GM12878 (cell line): ENCODE measurements at regions of chr12 and their contacts with region 1.

Region 1: GRCh38 chr12:674272-674781 is 11.1 kb upstream of the NINJ2 start:
- DNase-seq: peak; percentile 100
- ATAC-seq: peak; percentile 84
- H3K4me3 ChIP-seq: peak overlapping the region; percentile 61; the same call in 1 of the 2 replicates
- H3K27ac ChIP-seq: peak overlapping the region; percentile 100
- H3K4me1 ChIP-seq: peaks cover 57% of the 10 kb centered on the region
- H3K27me3 ChIP-seq: no peaks in the 10 kb centered on the region
- CTCF ChIP-seq: no peak
- EP300 ChIP-seq: peak; percentile 81 to 88
- POLR2A ChIP-seq: peak; percentile 83
- RAD21 ChIP-seq: peak; percentile 16; the same call in 1 of the 2 replicates

Region 2: DNA sequence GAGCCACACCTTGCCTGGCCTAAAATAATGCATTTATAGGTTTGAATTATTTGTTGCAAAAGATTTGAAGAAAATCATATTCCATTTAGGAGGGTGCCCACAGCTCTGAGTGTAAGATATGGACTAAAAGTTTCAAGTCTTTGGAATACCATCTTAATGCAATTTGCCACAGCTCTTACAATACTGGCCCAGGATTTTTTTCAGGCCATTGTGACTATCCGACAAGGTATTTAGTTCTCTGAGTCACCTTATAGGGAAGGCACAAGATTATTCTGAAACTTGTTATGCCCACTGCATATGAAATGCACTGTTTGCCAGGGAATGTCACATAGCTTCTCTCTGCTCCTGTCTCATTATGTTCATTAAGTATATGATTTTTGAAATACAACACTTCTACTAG is 382.1 kb before region 1 on chr12:
- CTCF ChIA-PET with region 1: no interaction called
- POLR2A ChIA-PET with region 1: no interaction called
- RAD21 ChIA-PET with region 1: no interaction called
- SMC1A ChIA-PET with region 1: no interaction called
- in situ Hi-C with region 1: no loop called
- intact Hi-C with region 1: no loop called
- DNase-seq: no peak
- ATAC-seq: no peak
- H3K4me3 ChIP-seq: no peak overlapping the region
- H3K27ac ChIP-seq: no peak overlapping the region
- H3K4me1 ChIP-seq: peaks cover under 1% of the 10 kb centered on the region; the same call in 1 of the 2 replicates
- H3K27me3 ChIP-seq: no peaks in the 10 kb centered on the region
- CTCF ChIP-seq: no peak
- EP300 ChIP-seq: no peak
- POLR2A ChIP-seq: no peak
- RAD21 ChIP-seq: no peak

Region 3: DNA sequence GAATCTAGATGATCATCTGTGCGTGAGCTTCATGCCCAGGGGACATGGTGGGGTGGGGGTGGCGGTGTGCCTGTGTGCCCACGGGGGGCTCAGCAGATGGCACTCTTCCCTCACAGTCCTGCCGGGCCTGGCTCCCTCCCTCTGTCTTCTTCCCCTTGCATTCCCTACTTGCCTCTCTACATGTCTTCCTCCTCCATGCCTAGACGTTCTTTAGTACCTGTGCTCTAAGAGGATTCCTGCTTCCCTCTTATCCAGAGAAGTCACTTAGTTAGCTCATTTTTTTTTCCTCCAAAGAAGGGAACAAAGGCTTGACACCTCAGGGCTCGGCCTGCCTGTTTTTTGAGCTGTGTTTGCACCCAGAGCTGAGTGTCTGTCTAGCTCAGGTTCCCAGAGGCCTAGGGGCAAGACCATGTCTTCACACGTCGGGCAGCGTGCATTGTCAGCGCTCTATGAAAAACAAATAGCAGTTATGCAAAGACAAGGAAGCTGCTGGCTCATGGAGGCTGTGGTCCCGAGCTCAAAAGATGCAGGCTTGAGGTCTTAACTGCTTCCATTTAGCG is 59.8 kb before region 1 on chr12:
- CTCF ChIA-PET with region 1: interaction called, 20 read pairs
- POLR2A ChIA-PET with region 1: interaction called, 6 read pairs
- RAD21 ChIA-PET with region 1: interaction called, 29 read pairs
- SMC1A ChIA-PET with region 1: interaction called, 20 read pairs
- in situ Hi-C with region 1: no loop called
- intact Hi-C with region 1: no loop called
- DNase-seq: no peak
- ATAC-seq: peak; percentile 78
- H3K4me3 ChIP-seq: no peak overlapping the region
- H3K27ac ChIP-seq: no peak overlapping the region
- H3K4me1 ChIP-seq: peaks cover 10% of the 10 kb centered on the region
- H3K27me3 ChIP-seq: no peaks in the 10 kb centered on the region
- CTCF ChIP-seq: peak; percentile 61 to 86 (median 63)
- EP300 ChIP-seq: no peak
- POLR2A ChIP-seq: no peak
- RAD21 ChIP-seq: peak; percentile 75

Region 4: DNA sequence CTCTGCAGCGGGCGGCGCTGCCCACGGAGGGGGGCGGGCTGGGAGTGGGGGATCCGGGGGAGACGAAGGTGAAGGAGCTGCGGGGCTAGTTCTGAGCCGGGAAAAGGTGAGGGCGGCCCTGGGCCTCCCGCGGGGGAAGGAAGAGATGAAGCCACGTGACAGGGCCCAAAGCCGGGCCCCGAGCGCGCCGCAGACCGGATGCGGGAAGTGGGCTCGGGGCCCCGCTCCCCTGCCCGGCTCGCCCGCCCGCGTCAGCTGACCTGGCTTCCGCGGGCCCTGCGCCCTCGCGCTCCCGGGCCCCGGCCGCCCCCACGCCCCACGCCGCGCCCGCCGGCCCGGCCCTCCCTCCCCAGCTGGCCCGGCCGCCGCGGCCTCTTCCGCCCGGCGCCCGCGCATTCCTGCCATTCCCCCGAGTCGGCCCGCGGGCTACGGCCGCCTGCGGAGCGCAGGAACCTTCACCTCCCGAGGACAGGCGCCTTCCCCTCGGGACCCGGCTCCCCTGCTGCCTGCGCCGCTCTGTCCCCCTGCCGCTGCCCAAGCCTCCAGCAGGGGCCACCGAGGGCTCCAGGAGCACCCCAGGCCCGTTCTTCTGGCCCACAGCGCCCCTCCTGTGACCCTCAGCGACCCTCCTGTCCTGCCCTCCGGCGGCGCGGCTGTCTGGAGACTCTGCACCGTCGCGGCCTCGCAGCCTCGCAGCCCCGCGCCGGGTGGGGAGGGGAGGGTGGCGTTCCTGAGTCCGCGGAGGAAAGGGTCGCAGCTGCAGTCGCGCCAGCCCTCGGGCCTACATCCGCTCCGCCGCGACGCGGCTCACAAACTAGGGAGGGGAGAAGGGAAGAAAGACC is 31.5 kb before region 1 on chr12:
- CTCF ChIA-PET with region 1: interaction called, 7 read pairs
- POLR2A ChIA-PET with region 1: interaction called, 47 read pairs
- RAD21 ChIA-PET with region 1: interaction called, 49 read pairs
- SMC1A ChIA-PET with region 1: interaction called, 12 read pairs
- in situ Hi-C with region 1: no loop called
- intact Hi-C with region 1: loop called (anchors 1 kb)
- DNase-seq: no peak
- ATAC-seq: peak; percentile 82
- H3K4me3 ChIP-seq: peak overlapping the region; percentile 82
- H3K27ac ChIP-seq: peak overlapping the region; percentile 86
- H3K4me1 ChIP-seq: peaks cover 57% of the 10 kb centered on the region
- H3K27me3 ChIP-seq: no peaks in the 10 kb centered on the region
- CTCF ChIP-seq: peak; percentile 20 to 68 (median 34)
- EP300 ChIP-seq: 0 out of 4 replicates have a peak, but pooled peaks of 1 of the 2 experiments have one; percentile 11
- POLR2A ChIP-seq: peak; percentile 83
- RAD21 ChIP-seq: peak; percentile 21

Region 5: GRCh38 chr12:685388-685787 is 11.1 kb after region 1 on chr12:
- CTCF ChIA-PET with region 1: interaction called, 12 read pairs
- POLR2A ChIA-PET with region 1: interaction called, 79 read pairs
- RAD21 ChIA-PET with region 1: interaction called, 88 read pairs
- SMC1A ChIA-PET with region 1: interaction called, 76 read pairs
- in situ Hi-C with region 1: no loop called
- intact Hi-C with region 1: no loop called
- DNase-seq: peak; percentile 88
- ATAC-seq: peak; percentile 84
- H3K4me3 ChIP-seq: peak overlapping the region; percentile 37; the same call in 1 of the 2 replicates
- H3K27ac ChIP-seq: peak overlapping the region; percentile 73
- H3K4me1 ChIP-seq: peaks cover 39% of the 10 kb centered on the region
- H3K27me3 ChIP-seq: no peaks in the 10 kb centered on the region
- CTCF ChIP-seq: no peak
- EP300 ChIP-seq: peak; percentile 44 to 64; a peak in 2 of 4 replicates
- POLR2A ChIP-seq: 0 out of 2 replicates have a peak, but pooled peaks have one; percentile 40
- RAD21 ChIP-seq: no peak

Region 6: GRCh38 chr12:716506-716905 is 42.2 kb after region 1 on chr12:
- CTCF ChIA-PET with region 1: interaction called, 5 read pairs
- POLR2A ChIA-PET with region 1: interaction called, 20 read pairs
- RAD21 ChIA-PET with region 1: interaction called, 16 read pairs
- SMC1A ChIA-PET with region 1: interaction called, 12 read pairs
- in situ Hi-C with region 1: no loop called
- intact Hi-C with region 1: loop called (anchors 2 kb)
- DNase-seq: no peak
- ATAC-seq: no peak
- H3K4me3 ChIP-seq: no peak overlapping the region
- H3K27ac ChIP-seq: no peak overlapping the region
- H3K4me1 ChIP-seq: peaks cover 24% of the 10 kb centered on the region
- H3K27me3 ChIP-seq: no peaks in the 10 kb centered on the region
- CTCF ChIP-seq: no peak
- EP300 ChIP-seq: no peak
- POLR2A ChIP-seq: no peak
- RAD21 ChIP-seq: no peak

Region 7: GRCh38 chr12:737122-737739 is 62.9 kb after region 1 on chr12:
- CTCF ChIA-PET with region 1: interaction called, 7 read pairs
- POLR2A ChIA-PET with region 1: interaction called, 8 read pairs
- RAD21 ChIA-PET with region 1: interaction called, 4 read pairs
- SMC1A ChIA-PET with region 1: interaction called, 10 read pairs
- in situ Hi-C with region 1: no loop called
- intact Hi-C with region 1: no loop called
- DNase-seq: no peak
- ATAC-seq: no peak
- H3K4me3 ChIP-seq: no peak overlapping the region
- H3K27ac ChIP-seq: no peak overlapping the region
- H3K4me1 ChIP-seq: no peaks in the 10 kb centered on the region
- H3K27me3 ChIP-seq: no peaks in the 10 kb centered on the region
- CTCF ChIP-seq: no peak
- EP300 ChIP-seq: no peak
- POLR2A ChIP-seq: no peak
- RAD21 ChIP-seq: no peak

Region 8: DNA sequence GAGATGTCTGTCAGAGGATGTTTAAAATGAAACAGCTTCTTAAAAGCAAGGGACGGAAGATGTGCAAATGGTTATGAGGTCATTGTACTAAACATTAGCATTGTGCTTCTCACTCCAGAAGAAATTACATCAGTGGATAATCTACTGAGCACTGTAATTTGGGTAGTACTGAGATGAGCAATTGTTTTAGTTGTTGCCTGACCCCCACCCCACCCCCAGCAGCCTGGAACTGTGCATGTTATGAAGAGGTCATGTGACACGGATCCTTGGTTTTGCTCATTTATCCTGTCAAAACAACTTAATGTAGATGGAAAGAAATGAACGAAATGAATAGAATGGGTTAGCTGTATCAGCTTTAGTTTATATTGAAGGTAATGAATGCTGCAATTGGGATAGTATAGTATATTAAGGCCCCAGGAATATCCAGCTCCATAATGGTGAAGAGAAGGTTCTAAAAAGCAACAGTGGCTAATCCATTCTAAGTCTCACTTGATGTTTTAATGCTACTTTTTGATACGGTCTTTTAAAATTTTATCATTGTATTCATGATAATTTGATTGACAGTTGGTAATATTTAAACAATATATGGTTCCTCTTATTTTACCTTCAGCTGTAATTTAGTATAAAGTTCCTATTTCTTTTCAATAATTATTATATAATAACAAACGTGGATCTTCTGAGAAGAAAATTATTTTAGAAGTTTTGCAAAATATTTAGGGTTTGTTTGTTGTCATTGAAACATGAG is 136.5 kb after region 1 on chr12:
- CTCF ChIA-PET with region 1: interaction called, 15 read pairs
- POLR2A ChIA-PET with region 1: interaction called, 8 read pairs
- RAD21 ChIA-PET with region 1: interaction called, 7 read pairs
- SMC1A ChIA-PET with region 1: interaction called, 20 read pairs
- in situ Hi-C with region 1: no loop called
- intact Hi-C with region 1: loop called (anchors 5 kb)
- DNase-seq: no peak
- ATAC-seq: peak; percentile 78
- H3K4me3 ChIP-seq: peak overlapping the region; percentile 5; the same call in 1 of the 2 replicates
- H3K27ac ChIP-seq: peak overlapping the region; percentile 9; the same call in 1 of the 2 replicates
- H3K4me1 ChIP-seq: peaks cover 49% of the 10 kb centered on the region
- H3K27me3 ChIP-seq: no peaks in the 10 kb centered on the region
- CTCF ChIP-seq: no peak
- EP300 ChIP-seq: peak; percentile 61 to 70; a peak in 2 of 4 replicates
- POLR2A ChIP-seq: no peak
- RAD21 ChIP-seq: no peak

Region 9: DNA sequence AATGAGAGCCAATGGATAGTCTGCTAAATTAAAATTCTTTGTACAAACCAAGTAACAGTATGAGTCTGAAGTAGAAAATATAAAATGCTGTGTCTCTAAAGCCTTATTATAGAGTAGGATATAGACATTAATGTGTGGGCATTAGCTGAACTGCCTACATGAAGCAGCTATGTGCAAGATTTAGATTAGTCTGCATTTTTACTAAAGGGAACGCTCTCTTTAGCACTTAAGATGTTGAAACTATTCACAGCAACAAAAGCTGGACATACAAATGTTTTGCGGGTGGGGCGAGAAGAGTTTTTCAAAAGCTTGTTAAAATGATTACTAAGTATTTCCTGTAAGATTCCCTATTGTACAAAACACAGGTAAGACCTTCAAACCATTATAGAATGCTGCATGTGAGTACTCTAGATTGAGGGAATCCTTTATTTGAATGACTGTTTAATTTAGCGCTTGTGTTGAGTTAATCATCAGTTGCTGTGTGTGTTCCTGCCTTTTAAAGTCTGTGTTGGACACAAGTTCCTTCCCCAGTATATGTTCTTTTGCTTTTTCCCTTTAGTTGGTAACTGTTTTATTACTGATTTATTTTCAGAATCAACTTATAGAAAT is 188.1 kb after region 1 on chr12:
- CTCF ChIA-PET with region 1: no interaction called
- POLR2A ChIA-PET with region 1: no interaction called
- RAD21 ChIA-PET with region 1: no interaction called
- SMC1A ChIA-PET with region 1: no interaction called
- in situ Hi-C with region 1: no loop called
- intact Hi-C with region 1: no loop called
- DNase-seq: no peak
- ATAC-seq: no peak
- H3K4me3 ChIP-seq: no peak overlapping the region
- H3K27ac ChIP-seq: no peak overlapping the region
- H3K4me1 ChIP-seq: 0 out of 2 replicates have a peak, but pooled peaks cover 2% of the 10 kb centered on the region
- H3K27me3 ChIP-seq: no peaks in the 10 kb centered on the region
- CTCF ChIP-seq: no peak
- EP300 ChIP-seq: no peak
- POLR2A ChIP-seq: no peak
- RAD21 ChIP-seq: no peak

Region 10: DNA sequence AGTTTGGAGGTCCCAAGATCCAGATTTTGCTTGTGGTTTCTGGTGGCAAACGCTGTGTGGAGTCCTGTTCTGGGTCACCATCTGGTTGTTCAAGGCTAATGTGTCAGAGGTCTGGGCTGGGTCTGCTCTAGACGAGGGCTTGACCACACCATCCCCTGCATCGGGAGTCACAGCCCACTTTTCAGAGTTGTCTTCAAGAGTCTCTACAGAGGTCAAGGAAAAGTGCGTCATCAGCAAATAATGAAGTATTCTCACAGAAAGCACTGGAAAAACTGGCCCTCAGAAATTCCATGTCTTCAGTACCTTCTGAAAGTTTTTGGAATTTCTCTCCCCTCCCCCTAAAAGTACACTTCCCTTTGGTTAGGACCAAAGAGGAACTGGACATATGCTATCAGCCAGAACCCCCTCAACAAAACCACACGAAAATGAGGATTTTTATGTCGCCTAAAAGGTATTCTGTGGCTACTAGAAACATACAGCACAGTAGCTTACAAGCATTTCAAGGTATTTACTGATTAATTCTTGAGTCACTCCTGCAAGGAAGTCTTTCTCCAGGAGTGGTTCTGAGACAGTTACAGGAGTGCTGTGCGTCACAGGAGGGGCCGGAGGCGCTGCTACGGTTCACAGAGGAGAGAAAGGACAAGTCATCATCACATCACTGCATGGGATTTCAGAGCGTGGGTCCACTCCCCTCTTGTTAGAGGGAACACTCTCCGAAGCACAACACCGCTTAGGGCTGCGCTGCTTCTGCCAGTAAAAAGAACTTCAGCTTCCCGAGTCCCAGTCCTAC is 239.8 kb after region 1 on chr12:
- CTCF ChIA-PET with region 1: no interaction called
- POLR2A ChIA-PET with region 1: no interaction called
- RAD21 ChIA-PET with region 1: no interaction called
- SMC1A ChIA-PET with region 1: no interaction called
- in situ Hi-C with region 1: no loop called
- intact Hi-C with region 1: no loop called
- DNase-seq: no peak
- ATAC-seq: no peak
- H3K4me3 ChIP-seq: no peak overlapping the region
- H3K27ac ChIP-seq: no peak overlapping the region
- H3K4me1 ChIP-seq: no peaks in the 10 kb centered on the region
- H3K27me3 ChIP-seq: no peaks in the 10 kb centered on the region
- CTCF ChIP-seq: no peak
- EP300 ChIP-seq: no peak
- POLR2A ChIP-seq: no peak
- RAD21 ChIP-seq: no peak